Activated T-helper 1 cell treated with anti-CD3 and anti-CD28 coated beads, Interleukin-12 subunit alpha, Interleukin-12 subunit beta, Interleukin-2, Interleukin-4 antibody, amounts not matched to agents 30 ng/mL and 10 ng/mL and 1 ng/mL, durations not matched to agents 14 hours and 24 hours and 36 hours (primary cell): ENCODE measurements at regions of chr16 and their contacts with region 1.

Region 1: DNA sequence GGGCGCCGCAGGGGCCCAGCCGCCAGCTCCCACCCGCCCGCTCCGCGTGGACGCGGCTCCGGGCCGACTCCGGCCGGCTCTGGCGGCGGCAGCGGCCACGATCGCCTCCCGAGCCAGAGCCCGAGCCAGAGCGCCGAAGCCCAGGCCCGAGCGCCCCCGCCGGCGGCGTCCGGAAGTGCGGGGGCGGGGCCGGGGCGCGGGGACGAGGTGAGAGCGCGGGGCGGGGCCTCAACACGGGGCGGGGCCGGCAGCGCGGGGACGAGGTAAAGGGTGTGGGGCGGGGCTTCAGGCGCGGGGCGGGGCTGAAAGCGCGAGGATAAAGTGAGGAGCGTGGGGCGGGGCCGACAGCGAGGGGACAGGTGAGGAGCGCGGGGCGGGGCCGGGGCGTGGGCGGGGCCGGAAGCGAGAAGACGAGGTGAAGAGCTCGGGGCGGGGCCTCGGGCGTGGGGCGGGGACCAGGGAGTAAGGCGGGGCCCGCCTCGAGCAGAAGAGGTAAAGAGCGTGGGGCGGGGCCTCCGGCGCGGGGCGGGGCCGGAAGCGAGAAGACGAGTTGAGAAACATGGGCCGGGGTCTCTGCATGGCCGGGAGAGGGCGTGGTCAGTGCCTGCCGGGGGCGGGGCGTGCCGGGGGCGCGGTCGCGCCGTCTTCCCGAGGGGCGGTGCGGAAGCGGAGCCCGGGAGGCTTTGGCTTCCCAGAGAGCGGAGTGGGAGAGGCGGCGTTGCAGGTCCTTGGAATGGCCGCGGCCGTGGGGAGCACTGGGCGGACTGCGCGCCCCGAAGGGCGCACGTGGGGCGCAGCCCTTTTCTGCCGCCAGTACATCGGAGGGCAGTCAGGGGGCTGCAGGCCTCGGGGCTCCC is at the start of gene AXIN1:
- DNase-seq: peak; percentile 97
- H3K4me3 Mint-ChIP-seq: peak within 1 kb of the TSS; percentile 92
- H3K27ac Mint-ChIP-seq: peak within 1 kb of the TSS; percentile 87
- H3K4me1 Mint-ChIP-seq: peaks cover 8% of the 10 kb centered on the region
- H3K27me3 Mint-ChIP-seq: peaks cover 4% of the 10 kb centered on the region
- total RNA-seq, gene AXIN1: 28.1 and 30.3 TPM in 2 replicates

Region 2: GRCh38 chr16:138049-138417 is 214.7 kb before region 1 on chr16:
- intact Hi-C with region 1: loop called (anchors 1 kb)
- DNase-seq: peak; percentile 27
- H3K4me3 Mint-ChIP-seq: peak overlapping the region; percentile 86
- H3K27ac Mint-ChIP-seq: no peak overlapping the region
- H3K4me1 Mint-ChIP-seq: peaks cover 15% of the 10 kb centered on the region
- H3K27me3 Mint-ChIP-seq: peaks cover 2% of the 10 kb centered on the region

Region 3: GRCh38 chr16:149024-149662 is 203.6 kb before region 1 on chr16:
- intact Hi-C with region 1: no loop called
- DNase-seq: no peak
- H3K4me3 Mint-ChIP-seq: no peak overlapping the region
- H3K27ac Mint-ChIP-seq: no peak overlapping the region
- H3K4me1 Mint-ChIP-seq: no peaks in the 10 kb centered on the region
- H3K27me3 Mint-ChIP-seq: peaks cover 34% of the 10 kb centered on the region

Region 4: DNA sequence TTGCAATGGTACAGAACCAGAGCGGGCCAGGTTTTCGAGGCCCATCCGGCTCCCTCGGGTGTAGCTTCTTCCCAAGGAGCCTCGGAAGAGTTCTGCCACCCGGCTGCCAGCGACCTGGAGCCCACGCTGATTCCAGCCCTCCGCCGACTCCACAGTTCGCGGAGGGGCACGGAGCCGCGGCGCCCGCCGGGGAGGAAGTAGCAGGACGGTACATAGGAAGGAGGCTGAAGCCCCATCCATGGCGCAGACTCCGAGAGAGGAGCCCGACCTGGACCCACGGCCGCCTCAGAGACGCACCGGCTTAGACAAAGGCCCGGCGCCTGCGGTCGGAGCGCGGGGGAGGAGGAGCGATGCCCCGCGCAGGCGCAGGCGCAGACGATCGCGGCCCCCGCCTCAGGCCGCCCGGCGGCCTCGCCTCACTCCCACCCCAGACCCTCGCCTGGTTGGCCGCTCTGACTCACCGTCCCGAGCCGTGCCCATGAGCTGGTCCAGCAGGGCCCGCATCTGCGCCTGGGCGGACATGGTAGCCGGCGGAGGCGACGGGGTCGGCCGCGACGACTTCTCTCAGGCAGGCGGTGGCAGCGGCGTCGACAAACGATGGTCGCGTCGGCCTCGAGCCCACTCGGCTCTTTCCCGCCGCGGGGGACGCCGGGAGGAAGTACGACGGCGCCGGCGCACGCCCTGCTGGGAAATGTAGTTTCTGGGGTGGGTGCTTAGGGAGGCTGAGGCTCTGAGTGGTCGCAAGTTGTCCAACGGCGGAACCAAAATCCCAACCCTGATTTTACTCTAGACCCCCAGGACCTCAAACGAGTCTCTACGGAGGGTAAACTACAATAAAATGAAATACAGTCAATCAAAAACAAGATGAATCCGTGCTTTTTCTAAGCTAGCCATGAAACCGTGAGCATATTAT is 123.7 kb before region 1 on chr16 and contains the start of gene LUC7L:
- intact Hi-C with region 1: loop called (anchors 1 kb)
- DNase-seq: peak; percentile 80
- H3K4me3 Mint-ChIP-seq: peak within 1 kb of the TSS; percentile 94
- H3K27ac Mint-ChIP-seq: peak within 1 kb of the TSS; percentile 91
- H3K4me1 Mint-ChIP-seq: peaks cover 31% of the 10 kb centered on the region
- H3K27me3 Mint-ChIP-seq: no peaks in the 10 kb centered on the region
- total RNA-seq, gene LUC7L: 77.7 and 83.0 TPM in 2 replicates

Region 5: GRCh38 chr16:234468-235305 is 118.1 kb before region 1 on chr16 and contains the start of gene FAM234A:
- intact Hi-C with region 1: loop called (anchors 1 kb)
- DNase-seq: peak; percentile 92
- H3K4me3 Mint-ChIP-seq: peak within 1 kb of the TSS; percentile 96
- H3K27ac Mint-ChIP-seq: peak within 1 kb of the TSS; percentile 98
- H3K4me1 Mint-ChIP-seq: peaks cover 14% of the 10 kb centered on the region
- H3K27me3 Mint-ChIP-seq: peaks cover 6% of the 10 kb centered on the region
- total RNA-seq, gene FAM234A: 18.0 and 21.2 TPM in 2 replicates

Region 6: DNA sequence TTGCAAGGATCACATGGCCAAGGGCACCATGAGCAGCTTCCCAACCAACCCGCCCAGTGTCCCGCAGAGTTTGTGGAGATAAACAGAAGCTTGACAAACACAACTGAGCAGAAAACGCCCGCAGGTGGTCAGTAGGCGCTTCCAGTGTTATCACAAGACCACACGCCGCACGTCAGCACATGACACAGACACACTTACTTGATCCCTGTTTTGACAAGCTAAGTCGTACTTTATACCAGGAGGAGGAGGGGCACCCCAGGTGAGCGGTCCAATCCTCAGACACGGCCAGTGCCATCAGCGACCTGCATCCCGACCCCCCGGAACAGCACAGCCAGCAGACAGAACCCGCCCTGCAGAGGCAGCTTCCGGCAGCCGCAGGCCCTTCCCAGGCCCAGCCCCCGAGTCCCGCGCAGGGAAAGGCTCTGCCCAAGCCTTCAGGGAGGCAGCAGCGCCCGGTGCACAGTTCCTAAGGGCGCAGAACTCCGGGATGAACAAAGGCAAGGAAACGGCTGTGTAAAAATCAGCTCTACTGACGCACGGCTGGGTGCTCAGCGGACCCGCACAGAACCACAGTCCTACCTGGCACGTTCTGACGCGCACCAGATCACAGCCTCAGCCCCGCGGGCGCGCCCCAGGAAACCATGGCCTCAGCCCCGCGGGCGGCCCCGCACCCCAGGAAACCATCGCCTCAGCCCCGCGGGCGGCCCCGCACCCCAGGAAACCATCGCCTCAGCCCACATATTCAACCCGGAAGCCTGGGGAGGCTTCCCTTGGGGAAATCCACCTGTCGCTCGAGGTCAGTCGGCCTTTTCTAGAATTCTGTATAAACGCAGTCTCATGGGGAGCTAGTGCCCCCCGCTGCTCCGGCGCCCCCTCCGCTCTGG is 28.1 kb before region 1 on chr16:
- intact Hi-C with region 1: no loop called
- DNase-seq: peak; percentile 62
- H3K4me3 Mint-ChIP-seq: peak overlapping the region; percentile 56
- H3K27ac Mint-ChIP-seq: no peak overlapping the region
- H3K4me1 Mint-ChIP-seq: peaks cover 36% of the 10 kb centered on the region
- H3K27me3 Mint-ChIP-seq: peaks cover 2% of the 10 kb centered on the region

Region 7: DNA sequence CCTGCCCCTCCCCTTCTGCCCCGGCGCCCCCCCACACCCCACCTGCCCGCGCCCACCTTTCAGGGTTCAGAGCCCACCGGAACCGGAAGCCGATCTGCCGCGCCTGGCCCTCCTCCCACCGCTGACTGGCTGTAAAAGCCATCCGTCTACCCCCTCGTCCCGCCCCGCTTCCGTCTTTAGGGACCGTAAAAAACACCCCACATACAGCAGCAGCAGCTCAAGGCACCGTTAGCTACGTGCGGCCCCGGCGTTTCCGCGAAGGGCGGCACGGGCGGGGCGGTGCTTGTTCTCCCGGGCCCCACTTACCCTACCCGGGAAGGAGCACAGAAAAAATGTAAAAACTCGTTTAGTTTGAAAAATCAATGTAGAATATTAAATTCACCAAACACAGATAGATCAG is 17.7 kb after region 1 on chr16 and contains the start of gene MRPL28:
- intact Hi-C with region 1: loop called (anchors 1 kb)
- DNase-seq: peak; percentile 92
- H3K4me3 Mint-ChIP-seq: peak within 1 kb of the TSS; percentile 86
- H3K27ac Mint-ChIP-seq: peak within 1 kb of the TSS; percentile 84
- H3K4me1 Mint-ChIP-seq: peaks cover 4% of the 10 kb centered on the region
- H3K27me3 Mint-ChIP-seq: no peaks in the 10 kb centered on the region
- total RNA-seq, gene MRPL28: 110 and 115 TPM in 2 replicates

Region 8: DNA sequence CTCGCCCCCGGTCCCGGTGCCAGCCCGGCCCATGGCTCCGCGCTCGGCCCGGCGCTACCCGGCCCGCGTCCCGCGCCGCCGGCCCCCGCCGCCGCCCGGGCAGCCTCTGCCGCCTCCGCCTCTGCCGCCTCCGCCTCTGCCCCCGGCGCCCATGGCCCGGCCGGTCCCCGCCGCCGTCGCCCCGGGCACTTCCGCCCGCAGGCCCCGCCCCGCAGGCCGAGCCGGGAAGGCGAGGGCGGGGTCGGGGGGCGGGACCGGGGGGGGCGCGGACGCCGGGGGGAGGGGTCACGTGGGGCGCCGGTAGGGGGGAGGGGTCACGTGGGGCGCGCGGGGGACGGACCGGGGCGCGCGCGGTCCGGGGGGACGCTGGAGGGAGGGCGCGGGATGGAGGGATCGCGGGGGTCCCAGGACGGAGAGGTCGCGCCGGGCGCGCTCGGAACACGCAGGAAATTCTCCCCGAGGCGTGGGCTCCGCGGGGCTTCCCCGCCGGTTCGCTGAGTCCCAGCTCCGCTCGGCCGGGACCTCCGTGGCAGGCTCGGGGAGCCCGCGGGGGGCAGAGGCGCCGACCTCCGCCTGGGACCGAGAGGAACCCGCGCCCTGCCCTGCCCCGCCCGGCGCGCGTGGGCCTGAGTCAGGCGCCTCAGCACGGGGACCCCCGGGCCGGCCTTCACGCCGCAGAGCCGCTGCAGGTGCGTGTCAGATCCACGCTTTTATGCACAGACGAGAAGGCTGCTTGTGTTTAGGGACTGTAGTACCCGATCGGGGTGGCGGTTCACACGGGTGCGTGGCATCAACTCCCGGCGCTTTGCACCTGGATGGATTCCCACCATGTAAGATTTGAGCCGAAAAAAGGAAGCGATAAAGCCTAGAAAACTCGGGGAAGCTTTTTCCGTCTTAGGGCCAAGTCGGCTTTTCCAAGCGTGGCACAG is 29.3 kb after region 1 on chr16 and contains the start of gene PGAP6:
- intact Hi-C with region 1: loop called (anchors 2 kb)
- DNase-seq: peak; percentile 55
- H3K4me3 Mint-ChIP-seq: peak within 1 kb of the TSS; percentile 82
- H3K27ac Mint-ChIP-seq: peak within 1 kb of the TSS; percentile 58
- H3K4me1 Mint-ChIP-seq: peaks cover 7% of the 10 kb centered on the region
- H3K27me3 Mint-ChIP-seq: peaks cover 14% of the 10 kb centered on the region
- total RNA-seq, gene PGAP6: 35.7 and 36.3 TPM in 2 replicates

Region 9: DNA sequence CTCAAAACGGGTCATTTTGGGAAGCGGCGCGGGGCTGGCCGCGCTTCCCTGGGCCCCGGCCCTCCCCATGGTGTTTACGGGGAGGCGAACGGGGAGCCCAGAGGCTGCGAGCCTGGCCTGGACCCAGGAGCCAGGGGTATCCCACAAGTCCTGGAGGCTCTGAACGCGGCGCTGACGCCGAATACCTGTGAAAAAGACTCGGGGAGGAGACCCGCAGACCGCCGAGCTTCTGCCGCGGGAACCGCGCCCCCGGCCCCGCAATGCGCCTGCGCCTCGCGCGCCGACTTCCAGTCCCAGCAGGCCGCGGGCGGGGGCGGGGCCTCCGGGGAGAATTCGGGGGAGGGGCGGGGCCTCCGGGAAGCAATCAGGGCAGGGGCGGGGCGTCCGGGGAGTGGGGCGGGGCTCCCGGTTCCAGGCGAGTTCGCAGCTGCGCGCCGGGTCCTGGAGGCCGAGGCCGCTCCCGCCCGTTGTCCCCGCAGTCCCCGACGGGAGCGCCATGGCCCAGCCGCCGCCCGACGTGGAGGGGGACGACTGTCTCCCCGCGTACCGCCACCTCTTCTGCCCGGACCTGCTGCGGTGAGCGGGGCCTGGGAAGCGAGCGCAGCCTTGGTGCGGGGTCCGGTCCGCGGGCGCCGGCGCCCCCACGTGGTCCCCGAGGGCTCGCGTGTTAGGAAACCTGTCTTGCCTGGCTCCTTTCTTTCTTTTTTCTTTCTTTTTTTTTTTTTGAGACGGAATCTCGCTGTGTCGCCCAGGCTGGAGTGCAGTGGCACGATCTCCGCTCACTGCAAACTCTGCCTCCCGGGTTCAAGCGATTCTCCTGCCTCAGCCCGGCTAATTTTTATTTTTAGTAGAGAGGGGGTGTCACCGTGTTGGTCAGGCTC is 48.9 kb after region 1 on chr16 and contains the start of gene DECR2:
- intact Hi-C with region 1: loop called (anchors 1 kb)
- DNase-seq: peak; percentile 90
- H3K4me3 Mint-ChIP-seq: peak within 1 kb of the TSS; percentile 87
- H3K27ac Mint-ChIP-seq: peak within 1 kb of the TSS; percentile 58
- H3K4me1 Mint-ChIP-seq: peaks cover 11% of the 10 kb centered on the region
- H3K27me3 Mint-ChIP-seq: peaks cover 2% of the 10 kb centered on the region
- total RNA-seq, gene DECR2: 18.0 and 20.1 TPM in 2 replicates